CD8-positive, alpha-beta T cell (primary cell): ENCODE measurements at regions of chr18 and their contacts with region 1.

Region 1: DNA sequence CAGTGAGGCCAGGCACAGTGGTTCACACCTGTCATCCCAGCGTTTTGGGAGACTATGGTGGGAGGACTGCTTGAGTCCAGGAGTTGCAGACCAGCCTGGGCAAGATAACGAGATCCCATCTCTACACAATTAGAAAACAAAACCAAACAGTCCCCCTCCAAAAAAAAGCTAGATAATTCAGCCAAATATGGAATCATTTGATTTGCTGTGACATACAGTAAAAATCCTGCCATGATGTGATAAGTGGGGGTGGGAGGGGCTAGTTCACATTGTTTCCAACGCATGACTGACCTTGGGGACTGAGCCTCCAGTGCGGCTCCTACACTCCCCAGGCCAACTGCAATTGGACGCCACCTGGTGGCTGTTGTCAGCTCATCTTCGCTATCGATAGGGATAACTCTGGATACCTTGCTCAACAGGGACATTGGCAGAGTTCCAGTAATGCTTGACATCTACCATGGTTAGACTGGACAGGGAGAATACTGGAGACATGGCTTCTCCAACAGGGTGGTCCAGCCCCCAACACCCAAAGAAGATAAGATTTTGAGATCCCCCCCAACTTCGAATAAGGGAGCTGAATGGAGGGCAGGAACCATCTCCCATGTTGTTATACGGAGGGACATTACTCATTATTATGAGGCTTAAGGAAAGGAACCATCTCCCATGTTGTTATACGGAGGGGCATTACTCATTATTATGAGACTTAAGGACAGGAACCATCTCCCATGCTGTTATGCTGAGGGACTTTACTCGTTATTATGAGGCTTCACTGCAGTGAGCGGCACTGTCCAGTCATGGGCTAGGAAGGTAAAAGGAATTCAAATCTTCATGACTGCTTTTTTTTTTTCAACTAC is 135.9 kb downstream of the TGIF1 start:
- DNase-seq: peak in 8 of 9 experiments; percentile 40 to 83 (median 66)
- ATAC-seq: peak; percentile 87
- H3K4me3 ChIP-seq: no peak overlapping the region
- H3K4me3 Mint-ChIP-seq: no peak overlapping the region
- H3K27ac ChIP-seq: no peak overlapping the region
- H3K27ac Mint-ChIP-seq: no peak overlapping the region
- H3K4me1 ChIP-seq: no peaks in the 10 kb centered on the region
- H3K4me1 Mint-ChIP-seq: peaks cover 8% of the 10 kb centered on the region
- H3K27me3 ChIP-seq: no peaks in the 10 kb centered on the region
- H3K27me3 Mint-ChIP-seq: no peaks in the 10 kb centered on the region
- CTCF ChIP-seq: peak; percentile 56

Region 2: GRCh38 chr18:3297025-3297984 is 288.6 kb before region 1 on chr18:
- CTCF ChIA-PET with region 1: interaction called, 10 read pairs
- POLR2A ChIA-PET with region 1: no interaction called
- intact Hi-C with region 1: no loop called
- DNase-seq: peak; percentile 86 to 95 (median 93)
- ATAC-seq: peak; percentile 98
- H3K4me3 ChIP-seq: peak overlapping the region; percentile 71 to 87
- H3K4me3 Mint-ChIP-seq: peak overlapping the region; percentile 92
- H3K27ac ChIP-seq: peak overlapping the region; percentile 51 to 58
- H3K27ac Mint-ChIP-seq: peak overlapping the region; percentile 86
- H3K4me1 ChIP-seq: peaks cover 7% of the 10 kb centered on the region
- H3K4me1 Mint-ChIP-seq: peaks cover 8% of the 10 kb centered on the region
- H3K27me3 ChIP-seq: peaks cover 0 to 2% of the 10 kb centered on the region in 2 experiments
- H3K27me3 Mint-ChIP-seq: peaks cover 27% of the 10 kb centered on the region
- CTCF ChIP-seq: peak; percentile 79

Region 3: DNA sequence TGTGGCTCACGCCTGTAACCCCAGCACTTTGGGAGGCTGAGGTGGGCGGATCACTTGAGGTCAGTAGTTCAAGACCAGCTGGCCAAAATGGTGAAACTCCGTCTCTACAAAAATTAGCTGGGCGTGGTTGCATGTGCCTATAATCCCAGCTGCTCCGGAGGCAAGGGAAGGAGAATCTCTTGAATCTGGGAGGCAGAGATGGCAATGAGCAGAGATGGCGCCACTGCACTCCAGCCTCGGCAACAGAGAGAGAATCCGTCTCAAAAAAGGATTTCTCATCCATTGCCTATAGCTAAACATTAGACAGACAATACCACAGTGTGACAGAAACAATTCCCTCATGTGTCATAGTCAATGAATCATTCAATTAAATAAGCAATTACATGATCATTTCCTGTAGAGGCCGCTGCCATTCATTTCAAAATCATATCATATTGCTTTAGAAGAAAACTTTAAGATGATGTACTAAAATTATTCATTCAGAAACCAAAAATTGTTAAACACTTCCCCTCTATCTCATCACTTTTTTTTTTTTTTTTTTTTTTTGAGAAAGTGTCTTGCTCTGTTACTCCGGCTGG is 205.4 kb before region 1 on chr18:
- CTCF ChIA-PET with region 1: interaction called, 3 read pairs
- POLR2A ChIA-PET with region 1: no interaction called
- intact Hi-C with region 1: loop called (anchors 2 to 5 kb)
- DNase-seq: peak in 2 of 9 experiments; percentile 51 to 61
- ATAC-seq: peak; percentile 58
- H3K4me3 ChIP-seq: no peak overlapping the region
- H3K4me3 Mint-ChIP-seq: no peak overlapping the region
- H3K27ac ChIP-seq: no peak overlapping the region
- H3K27ac Mint-ChIP-seq: no peak overlapping the region
- H3K4me1 ChIP-seq: no peaks in the 10 kb centered on the region
- H3K4me1 Mint-ChIP-seq: no peaks in the 10 kb centered on the region
- H3K27me3 ChIP-seq: no peaks in the 10 kb centered on the region
- H3K27me3 Mint-ChIP-seq: peaks cover 4% of the 10 kb centered on the region
- CTCF ChIP-seq: peak; percentile 21

Region 4: DNA sequence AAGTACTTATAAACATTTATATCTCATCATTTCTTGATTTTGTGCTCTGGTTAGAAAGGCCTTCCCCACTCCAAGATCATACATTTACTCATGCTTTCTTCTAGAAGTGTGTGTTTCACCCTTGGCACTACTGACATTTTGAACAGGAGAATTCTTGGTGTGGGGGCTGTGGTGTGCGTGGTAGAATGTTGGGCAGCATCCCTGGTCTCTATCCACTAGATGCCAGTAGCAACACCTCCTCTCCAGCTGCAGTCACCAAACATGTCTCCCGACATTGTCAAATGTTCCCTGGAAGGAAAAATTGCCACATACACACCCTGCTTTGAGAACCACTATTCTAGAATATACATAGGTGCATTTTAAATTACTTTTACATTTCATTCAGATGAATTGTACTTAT is 144.6 kb before region 1 on chr18:
- CTCF ChIA-PET with region 1: interaction called, 14 read pairs
- POLR2A ChIA-PET with region 1: no interaction called
- intact Hi-C with region 1: loop called in 1 of 2 experiments (anchors 1 kb)
- DNase-seq: peak in 3 of 9 experiments; percentile 16 to 67 (median 56)
- ATAC-seq: peak; percentile 67
- H3K4me3 ChIP-seq: no peak overlapping the region
- H3K4me3 Mint-ChIP-seq: no peak overlapping the region
- H3K27ac ChIP-seq: no peak overlapping the region
- H3K27ac Mint-ChIP-seq: no peak overlapping the region
- H3K4me1 ChIP-seq: no peaks in the 10 kb centered on the region
- H3K4me1 Mint-ChIP-seq: peaks cover 5% of the 10 kb centered on the region
- H3K27me3 ChIP-seq: no peaks in the 10 kb centered on the region
- H3K27me3 Mint-ChIP-seq: no peaks in the 10 kb centered on the region
- CTCF ChIP-seq: peak; percentile 20

Region 5: GRCh38 chr18:3466045-3466444 is 119.8 kb before region 1 on chr18:
- CTCF ChIA-PET with region 1: interaction called, 13 read pairs
- POLR2A ChIA-PET with region 1: no interaction called
- intact Hi-C with region 1: no loop called
- DNase-seq: no peak
- ATAC-seq: no peak
- H3K4me3 ChIP-seq: no peak overlapping the region
- H3K4me3 Mint-ChIP-seq: no peak overlapping the region
- H3K27ac ChIP-seq: no peak overlapping the region
- H3K27ac Mint-ChIP-seq: no peak overlapping the region
- H3K4me1 ChIP-seq: peaks cover 16% of the 10 kb centered on the region
- H3K4me1 Mint-ChIP-seq: peaks cover 20% of the 10 kb centered on the region
- H3K27me3 ChIP-seq: no peaks in the 10 kb centered on the region
- H3K27me3 Mint-ChIP-seq: no peaks in the 10 kb centered on the region
- CTCF ChIP-seq: no peak